T-cell (primary cell): ENCODE measurements at regions of chr1 and their contacts with region 1.

Region 1: DNA sequence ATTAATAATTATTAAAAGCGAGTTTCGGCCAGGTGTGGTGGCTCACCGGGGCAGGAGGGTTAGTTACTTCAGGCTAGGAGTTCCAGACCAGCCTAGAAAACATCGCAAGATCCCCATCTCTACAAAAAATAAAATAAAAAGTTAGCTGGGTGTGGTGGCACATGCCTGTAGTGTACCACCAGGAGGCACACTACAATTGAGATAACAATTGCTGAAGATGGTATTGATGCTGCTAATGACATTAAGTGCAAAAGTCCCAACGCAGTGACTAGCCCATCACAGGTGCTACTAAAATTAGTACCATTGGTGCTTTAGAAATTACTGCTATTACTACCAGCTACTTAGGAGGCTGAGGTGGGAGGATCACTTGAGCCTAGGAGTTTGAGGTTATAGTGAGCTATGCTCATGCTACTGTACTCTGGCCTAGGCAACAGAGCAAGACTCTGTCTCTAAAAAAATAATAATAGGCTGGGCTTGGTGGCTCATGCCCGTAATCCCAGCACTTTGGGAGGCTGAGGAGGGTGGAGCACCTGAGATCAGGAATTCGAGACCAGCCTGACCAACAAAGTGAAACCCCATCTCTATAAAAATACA is 156.6 kb downstream of the GREM2 start:
- DNase-seq: peak in 6 of 35 experiments; percentile 0 to 47 (median 2)
- ATAC-seq: no peak
- H3K4me3 ChIP-seq: no peak overlapping the region
- H3K4me3 Mint-ChIP-seq: no peak overlapping the region
- H3K27ac ChIP-seq: no peak overlapping the region
- H3K27ac Mint-ChIP-seq: no peak overlapping the region
- H3K4me1 ChIP-seq: no peaks in the 10 kb centered on the region
- H3K4me1 Mint-ChIP-seq: no peaks in the 10 kb centered on the region
- H3K27me3 ChIP-seq: no peaks in the 10 kb centered on the region
- H3K27me3 Mint-ChIP-seq: no peaks in the 10 kb centered on the region

Region 2: DNA sequence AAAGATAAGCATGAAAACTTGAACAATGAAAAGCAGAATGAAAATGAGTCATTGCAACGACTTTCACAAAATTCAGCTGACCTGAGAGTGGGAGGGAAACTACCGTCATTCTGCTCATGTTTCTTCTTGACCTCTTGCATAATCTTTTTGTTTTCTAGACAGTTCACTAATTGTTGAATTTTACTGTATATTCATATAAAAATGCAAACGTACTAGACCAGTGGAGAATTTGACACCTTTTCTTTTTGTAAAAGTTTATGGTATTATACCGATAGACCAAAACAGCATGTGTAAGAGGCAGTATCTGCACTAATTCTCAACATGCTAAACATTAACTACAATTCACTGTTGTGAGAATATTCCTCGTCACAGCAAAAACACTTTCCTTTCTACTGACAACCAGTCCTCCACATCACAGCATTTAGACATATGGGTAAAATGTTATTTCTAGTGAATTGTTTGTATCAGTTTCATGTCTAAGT is 18.8 kb after region 1 on chr1:
- CTCF ChIA-PET with region 1: interaction called in 1 of 2 experiments, 3 read pairs
- POLR2A ChIA-PET with region 1: interaction called in 1 of 2 experiments, 11 read pairs
- DNase-seq: no peak
- ATAC-seq: no peak
- H3K4me3 ChIP-seq: no peak overlapping the region
- H3K4me3 Mint-ChIP-seq: no peak overlapping the region
- H3K27ac ChIP-seq: no peak overlapping the region
- H3K27ac Mint-ChIP-seq: no peak overlapping the region
- H3K4me1 ChIP-seq: no peaks in the 10 kb centered on the region
- H3K4me1 Mint-ChIP-seq: no peaks in the 10 kb centered on the region
- H3K27me3 ChIP-seq: peaks cover 0 to 5% of the 10 kb centered on the region in 2 experiments
- H3K27me3 Mint-ChIP-seq: peaks cover 0 to 3% of the 10 kb centered on the region in 2 donors

Region 3: DNA sequence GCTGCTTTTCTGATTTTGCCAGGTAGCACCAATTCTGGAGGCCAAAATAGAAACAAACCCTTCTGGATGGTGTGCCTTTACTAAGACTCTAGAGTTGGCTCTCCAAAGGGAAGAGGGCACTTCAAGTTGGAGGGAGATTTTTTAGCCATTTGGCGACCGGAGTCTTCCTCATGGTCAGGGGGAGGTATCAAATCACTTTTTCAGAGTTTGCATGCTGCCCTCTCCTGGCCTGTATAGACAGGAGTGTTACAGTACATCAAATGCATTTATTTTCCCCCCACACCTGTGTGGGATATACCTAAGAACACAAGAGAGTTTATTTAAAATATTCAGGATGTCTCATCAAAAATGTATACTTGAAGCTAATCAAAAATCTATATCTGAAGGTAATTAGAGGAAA is 153.4 kb after region 1 on chr1:
- CTCF ChIA-PET with region 1: interaction called in 1 of 2 experiments, 13 read pairs
- POLR2A ChIA-PET with region 1: no interaction called
- DNase-seq: peak in 3 of 35 experiments; percentile 2 to 22 (median 4)
- ATAC-seq: no peak
- H3K4me3 ChIP-seq: no peak overlapping the region
- H3K4me3 Mint-ChIP-seq: peak overlapping the region in 1 of 3 donors; percentile 31
- H3K27ac ChIP-seq: no peak overlapping the region
- H3K27ac Mint-ChIP-seq: no peak overlapping the region
- H3K4me1 ChIP-seq: peaks cover 0 to 9% of the 10 kb centered on the region in 2 experiments
- H3K4me1 Mint-ChIP-seq: peaks cover 20 to 45% (median 38%) of the 10 kb centered on the region in 3 donors
- H3K27me3 ChIP-seq: peaks cover 6 to 15% of the 10 kb centered on the region in 2 experiments
- H3K27me3 Mint-ChIP-seq: peaks cover 15 to 30% of the 10 kb centered on the region in 2 donors